ENCODE measurements at regions of chr19 and their contacts with region 1.

Region 1: GRCh38 chr19:37370880-37371661 is at the start of gene ZNF527:
- DNase-seq: peak; percentile 96
- ATAC-seq: peak; percentile 98
- H3K4me3 Mint-ChIP-seq: peak within 1 kb of the TSS; percentile 99
- H3K27ac Mint-ChIP-seq: peak within 1 kb of the TSS; percentile 98
- H3K4me1 Mint-ChIP-seq: peaks cover 14% of the 10 kb centered on the region
- H3K27me3 Mint-ChIP-seq: no peaks in the 10 kb centered on the region
- CTCF ChIP-seq: no peak
- total RNA-seq, gene ZNF527: 6.3 and 8.1 TPM in 2 replicates

Region 2: GRCh38 chr19:36837906-36838783 is 532.9 kb before region 1 on chr19 and contains the start of gene ZNF790:
- CTCF ChIA-PET with region 1: no interaction called
- POLR2A ChIA-PET with region 1: no interaction called
- intact Hi-C with region 1: loop called (anchors 1 kb)
- DNase-seq: peak; percentile 76
- ATAC-seq: peak; percentile 94
- H3K4me3 Mint-ChIP-seq: no peak within 1 kb of the TSS
- H3K27ac Mint-ChIP-seq: no peak within 1 kb of the TSS
- H3K4me1 Mint-ChIP-seq: peaks cover 2% of the 10 kb centered on the region
- H3K27me3 Mint-ChIP-seq: no peaks in the 10 kb centered on the region
- CTCF ChIP-seq: no peak
- total RNA-seq, gene ZNF790: 10.3 and 11.5 TPM in 2 replicates

Region 3: DNA sequence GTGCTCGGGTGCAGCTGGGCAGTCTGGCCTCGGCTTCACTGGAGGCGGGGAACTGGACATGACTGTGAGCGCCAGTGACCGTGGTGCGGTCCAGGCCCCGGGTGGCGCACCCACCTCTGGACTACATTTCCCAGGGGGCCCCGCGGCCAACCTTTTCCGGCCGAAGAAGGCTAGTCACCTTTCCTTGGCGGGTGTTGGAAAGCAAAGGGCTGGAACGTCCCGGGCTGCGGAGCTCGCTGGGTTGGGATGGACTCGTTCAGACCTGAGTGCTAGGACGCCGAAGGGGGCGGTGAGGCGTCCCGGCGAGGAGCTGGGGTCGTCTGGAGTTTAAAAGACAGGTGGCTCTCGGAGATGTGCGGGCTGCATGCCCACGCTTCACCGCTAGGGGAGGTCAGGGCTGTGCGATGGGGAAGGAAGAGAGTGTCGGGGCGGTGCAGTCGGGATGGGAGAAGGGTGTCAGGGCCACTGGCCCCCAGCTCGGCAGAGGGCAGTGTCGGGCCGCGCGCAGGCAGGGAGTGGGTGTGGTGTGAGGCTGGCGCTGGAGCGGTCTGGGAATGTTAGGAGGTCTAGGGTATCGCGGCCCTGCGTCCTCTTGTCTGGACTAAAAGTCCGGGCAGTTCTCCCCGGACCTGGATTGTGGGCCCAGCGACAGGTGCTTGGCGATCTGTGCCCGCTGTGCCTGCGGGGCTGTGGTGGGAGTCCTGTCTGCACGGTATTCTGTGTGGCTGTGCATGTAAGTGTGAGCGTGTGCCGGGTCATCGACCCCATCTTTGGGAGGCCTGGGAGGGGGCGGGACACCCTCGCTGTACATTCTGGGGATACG is 397.8 kb before region 1 on chr19:
- CTCF ChIA-PET with region 1: no interaction called
- POLR2A ChIA-PET with region 1: no interaction called
- intact Hi-C with region 1: loop called (anchors 2 kb)
- DNase-seq: peak; percentile 75
- ATAC-seq: peak; percentile 97
- H3K4me3 Mint-ChIP-seq: peak overlapping the region; percentile 98
- H3K27ac Mint-ChIP-seq: peak overlapping the region; percentile 94
- H3K4me1 Mint-ChIP-seq: peaks cover 10% of the 10 kb centered on the region
- H3K27me3 Mint-ChIP-seq: no peaks in the 10 kb centered on the region
- CTCF ChIP-seq: peak; percentile 38

Region 4: DNA sequence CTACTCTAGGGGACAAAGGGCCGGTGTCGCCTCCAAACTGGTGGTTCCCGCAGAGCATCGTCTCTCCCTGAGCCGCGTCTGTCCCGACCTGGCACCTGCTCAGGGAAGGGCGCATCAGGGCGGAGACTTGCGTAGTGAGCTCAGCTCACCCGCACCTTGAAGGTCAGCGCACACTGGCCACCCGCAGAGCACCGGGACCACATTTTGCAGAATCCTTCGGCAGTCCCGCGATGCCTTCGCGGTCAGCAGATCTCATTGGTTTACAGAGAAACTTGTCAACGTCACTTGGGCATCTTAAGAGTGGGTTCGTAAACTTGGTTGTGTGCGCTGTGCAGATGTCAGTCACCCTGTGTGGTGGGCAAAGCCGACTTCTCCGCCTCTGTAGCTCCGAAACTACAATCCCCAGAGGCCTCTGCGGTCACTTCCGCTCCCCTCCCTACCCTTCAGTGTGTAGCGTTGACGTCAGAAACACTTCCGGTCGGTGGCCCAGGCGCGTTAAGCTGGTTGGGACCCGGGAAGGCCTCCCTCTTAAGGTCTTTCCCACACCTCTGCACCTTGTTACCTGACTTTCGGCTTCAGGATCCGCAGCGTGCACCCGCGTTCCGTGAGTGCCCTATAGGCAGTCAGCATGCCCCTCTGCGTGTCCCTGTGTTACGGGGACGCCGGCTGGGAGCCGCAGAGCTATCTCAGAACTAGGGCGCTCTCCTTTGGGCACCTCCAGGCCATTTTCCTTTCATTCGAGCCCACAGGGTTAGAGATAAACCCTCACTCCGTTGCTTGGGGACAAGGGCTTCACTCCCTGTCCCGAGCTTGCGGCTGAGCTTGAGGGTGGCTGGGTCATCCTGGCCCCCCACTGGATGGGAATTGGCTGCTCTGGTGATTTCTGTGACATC is 36.6 kb before region 1 on chr19:
- CTCF ChIA-PET with region 1: no interaction called
- POLR2A ChIA-PET with region 1: interaction called, 14 read pairs
- intact Hi-C with region 1: loop called (anchors 1 kb)
- DNase-seq: peak; percentile 74
- ATAC-seq: peak; percentile 98
- H3K4me3 Mint-ChIP-seq: peak overlapping the region; percentile 91
- H3K27ac Mint-ChIP-seq: peak overlapping the region; percentile 83
- H3K4me1 Mint-ChIP-seq: peaks cover 28% of the 10 kb centered on the region
- H3K27me3 Mint-ChIP-seq: no peaks in the 10 kb centered on the region
- CTCF ChIP-seq: no peak

Region 5: DNA sequence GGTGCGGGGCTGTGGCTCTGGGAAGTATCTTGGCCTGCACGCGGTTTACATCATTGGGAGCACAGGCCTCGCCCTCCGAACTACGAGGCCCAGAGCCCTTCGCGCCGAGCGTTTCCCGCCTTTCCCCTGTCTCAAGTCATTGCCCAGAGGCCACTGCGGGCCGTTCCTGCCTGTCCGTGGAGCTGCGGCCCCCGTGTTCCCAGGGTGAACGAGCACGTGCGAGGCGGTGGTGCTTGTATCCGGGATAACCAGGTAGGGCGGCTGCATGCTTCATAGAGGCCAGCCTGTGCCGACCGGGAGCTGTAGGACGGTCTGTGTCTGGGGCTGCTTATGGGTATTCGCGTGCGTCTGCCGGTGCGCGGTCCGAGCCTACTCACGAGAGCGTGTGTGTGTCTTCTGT is 32.3 kb after region 1 on chr19:
- CTCF ChIA-PET with region 1: no interaction called
- POLR2A ChIA-PET with region 1: no interaction called
- intact Hi-C with region 1: no loop called
- DNase-seq: no peak
- ATAC-seq: no peak
- H3K4me3 Mint-ChIP-seq: no peak overlapping the region
- H3K27ac Mint-ChIP-seq: no peak overlapping the region
- H3K4me1 Mint-ChIP-seq: no peaks in the 10 kb centered on the region
- H3K27me3 Mint-ChIP-seq: no peaks in the 10 kb centered on the region
- CTCF ChIP-seq: no peak

Region 6: GRCh38 chr19:37594304-37594981 is 223.4 kb after region 1 on chr19 and contains the starts of genes ZNF540 and ZNF571:
- CTCF ChIA-PET with region 1: no interaction called
- POLR2A ChIA-PET with region 1: interaction called, 13 read pairs
- intact Hi-C with region 1: loop called (anchors 1 kb)
- DNase-seq: peak; percentile 83
- ATAC-seq: peak; percentile 97
- H3K4me3 Mint-ChIP-seq: peak within 1 kb of the TSS; percentile 98
- H3K27ac Mint-ChIP-seq: peak within 1 kb of the TSS; percentile 97
- H3K4me1 Mint-ChIP-seq: peaks cover 23% of the 10 kb centered on the region
- H3K27me3 Mint-ChIP-seq: no peaks in the 10 kb centered on the region
- CTCF ChIP-seq: no peak
- total RNA-seq, gene ZNF540: 1.9 and 2.9 TPM in 2 replicates
- total RNA-seq, gene ZNF571: 5.0 and 5.2 TPM in 2 replicates

Region 7: GRCh38 chr19:37779127-37780005 is 408.3 kb after region 1 on chr19 and contains the start of gene ZNF573:
- CTCF ChIA-PET with region 1: no interaction called
- POLR2A ChIA-PET with region 1: interaction called, 6 read pairs
- intact Hi-C with region 1: loop called (anchors 1 kb)
- DNase-seq: peak; percentile 70
- ATAC-seq: peak; percentile 86
- H3K4me3 Mint-ChIP-seq: peak within 1 kb of the TSS; percentile 91
- H3K27ac Mint-ChIP-seq: peak within 1 kb of the TSS; percentile 96
- H3K4me1 Mint-ChIP-seq: peaks cover 31% of the 10 kb centered on the region
- H3K27me3 Mint-ChIP-seq: no peaks in the 10 kb centered on the region
- CTCF ChIP-seq: no peak
- total RNA-seq, gene ZNF573: 18.7 and 19.8 TPM in 2 replicates